ENCODE measurements at regions of chr13 and their contacts with region 1.

Region 1: DNA sequence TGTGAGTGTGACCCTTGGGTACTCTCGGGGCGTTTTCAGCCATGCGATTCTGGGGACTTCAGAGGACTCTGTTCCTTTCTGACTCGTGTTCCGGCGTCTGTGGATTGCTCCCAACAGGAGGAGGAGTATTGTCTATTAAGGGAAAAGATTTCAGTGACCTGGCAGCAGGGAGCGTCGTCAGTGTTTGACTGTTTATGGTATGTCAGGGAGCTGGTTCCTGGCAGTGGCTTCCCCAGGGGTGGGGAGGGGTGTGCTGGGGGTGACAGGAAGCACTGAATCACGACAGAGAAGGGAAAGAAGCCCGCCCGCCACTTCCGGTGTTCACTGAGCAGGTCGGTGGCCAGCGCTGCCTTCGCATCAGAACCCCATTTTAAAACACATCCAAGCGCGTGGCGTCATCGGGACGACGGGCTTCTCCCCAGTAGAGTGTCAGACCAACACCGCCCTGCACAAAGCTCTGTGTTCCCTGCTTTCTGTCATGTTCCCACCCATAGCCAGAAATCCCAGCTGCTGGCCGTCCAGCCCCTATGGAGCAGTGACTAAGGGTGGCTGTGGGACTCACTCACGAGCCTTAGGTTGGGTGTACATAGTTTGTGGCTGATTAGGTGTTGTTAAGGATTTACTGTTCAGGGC is 33.8 kb downstream of the COL4A2 start:
- DNase-seq: peak; percentile 98
- H3K4me3 ChIP-seq: peak overlapping the region in 3 of 4 donors; percentile 18 to 29 (median 26)
- H3K27ac ChIP-seq: peak overlapping the region; percentile 88 to 100 (median 94)
- H3K4me1 ChIP-seq: peaks cover 0 to 91% (median 88%) of the 10 kb centered on the region in 4 donors
- H3K27me3 ChIP-seq: no peaks in the 10 kb centered on the region
- CTCF ChIP-seq: no peak
- EP300 ChIP-seq: peak; percentile 45 to 94 (median 74)
- POLR2A ChIP-seq: peak; percentile 59 to 78

Region 2: GRCh38 chr13:110116072-110116487 is 224.8 kb before region 1 on chr13:
- intact Hi-C with region 1: no loop called
- DNase-seq: peak; percentile 79
- H3K4me3 ChIP-seq: no peak overlapping the region
- H3K27ac ChIP-seq: no peak overlapping the region
- H3K4me1 ChIP-seq: peaks cover 0 to 10% (median 8%) of the 10 kb centered on the region in 4 donors
- H3K27me3 ChIP-seq: peaks cover 0 to 2% (median 0%) of the 10 kb centered on the region in 3 donors
- CTCF ChIP-seq: peak; percentile 46 to 79 (median 66)
- EP300 ChIP-seq: no peak
- POLR2A ChIP-seq: no peak

Region 3: GRCh38 chr13:110312339-110313031 is 28.4 kb before region 1 on chr13:
- intact Hi-C with region 1: loop called (anchors 2 kb)
- DNase-seq: peak; percentile 84
- H3K4me3 ChIP-seq: peak overlapping the region in 3 of 4 donors; percentile 83 to 99 (median 98)
- H3K27ac ChIP-seq: peak overlapping the region; percentile 98 to 100 (median 99)
- H3K4me1 ChIP-seq: peaks cover 0 to 83% (median 78%) of the 10 kb centered on the region in 4 donors
- H3K27me3 ChIP-seq: no peaks in the 10 kb centered on the region
- CTCF ChIP-seq: no peak
- EP300 ChIP-seq: peak in 1 of 4 donors; percentile 59
- POLR2A ChIP-seq: peak in 1 of 2 donors; percentile 34

Region 4: GRCh38 chr13:110387391-110388107 is 46.6 kb after region 1 on chr13:
- intact Hi-C with region 1: loop called (anchors 2 kb)
- DNase-seq: peak; percentile 91
- H3K4me3 ChIP-seq: peak overlapping the region in 3 of 4 donors; percentile 7 to 13 (median 8)
- H3K27ac ChIP-seq: peak overlapping the region; percentile 90 to 96 (median 93)
- H3K4me1 ChIP-seq: peaks cover 0 to 59% (median 45%) of the 10 kb centered on the region in 4 donors
- H3K27me3 ChIP-seq: no peaks in the 10 kb centered on the region
- CTCF ChIP-seq: no peak
- EP300 ChIP-seq: peak in 2 of 4 donors; percentile 14 to 72
- POLR2A ChIP-seq: peak in 1 of 2 donors; percentile 50

Region 5: GRCh38 chr13:110412132-110412914 is 71.4 kb after region 1 on chr13:
- intact Hi-C with region 1: loop called (anchors 2 kb)
- DNase-seq: peak; percentile 98
- H3K4me3 ChIP-seq: no peak overlapping the region
- H3K27ac ChIP-seq: peak overlapping the region; percentile 87 to 98 (median 90)
- H3K4me1 ChIP-seq: peaks cover 2 to 93% (median 90%) of the 10 kb centered on the region in 4 donors
- H3K27me3 ChIP-seq: no peaks in the 10 kb centered on the region
- CTCF ChIP-seq: peak; percentile 76 to 96 (median 89)
- EP300 ChIP-seq: peak; percentile 78 to 99 (median 86)
- POLR2A ChIP-seq: no peak

Measured in sigmoid colon (tissue), 7 donors.